ENCODE measurements at regions of chr17 and their contacts with region 1.

Region 1: GRCh38 chr17:16521070-16521727 is 29.2 kb upstream of the LRRC75A start:
- DNase-seq: peak; percentile 94
- ATAC-seq: peak; percentile 92
- H3K4me3 ChIP-seq: no peak overlapping the region
- H3K27ac ChIP-seq: no peak overlapping the region
- H3K4me1 ChIP-seq: peaks cover 13% of the 10 kb centered on the region
- H3K27me3 ChIP-seq: no peaks in the 10 kb centered on the region
- CTCF ChIP-seq: peak; percentile 99

Region 2: DNA sequence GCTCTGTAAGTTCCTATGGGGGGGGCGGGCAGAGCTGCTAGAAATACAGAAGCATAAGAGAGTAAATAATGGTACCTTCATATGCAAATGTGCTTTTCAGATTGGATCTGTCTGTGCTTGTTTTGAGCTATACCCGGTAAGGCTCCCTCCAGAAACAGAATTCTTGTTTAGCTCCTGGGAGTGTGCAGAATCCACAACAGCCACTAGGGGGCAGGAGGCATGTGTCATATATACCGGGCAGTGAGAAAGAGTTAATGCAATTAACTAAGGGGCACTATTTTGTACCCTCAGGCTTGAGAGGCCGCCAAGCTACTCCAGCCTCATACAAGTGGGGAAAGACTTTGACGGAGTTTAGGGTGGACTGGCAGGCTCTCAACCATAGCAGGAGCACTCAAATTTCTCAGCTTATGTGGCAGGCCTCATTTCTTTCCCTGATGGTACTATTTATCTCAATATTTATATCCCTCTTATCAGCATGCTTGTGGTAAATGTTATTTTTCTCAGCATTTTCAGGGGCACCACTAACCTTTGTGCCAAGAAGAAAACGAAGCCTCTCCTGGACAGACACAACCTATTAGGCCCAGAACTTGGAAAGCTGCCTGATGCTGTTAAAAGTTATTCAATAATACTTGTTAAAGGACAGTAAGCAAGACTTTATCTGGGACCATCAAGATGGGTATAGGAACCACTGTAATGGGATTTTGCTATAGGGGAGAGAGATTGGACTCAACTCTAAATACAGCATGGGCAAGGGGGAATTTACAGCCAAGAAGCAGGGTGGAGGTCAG is 157.3 kb before region 1 on chr17:
- CTCF ChIA-PET with region 1: interaction called, 3 read pairs
- POLR2A ChIA-PET with region 1: no interaction called
- intact Hi-C with region 1: loop called (anchors 2 kb)
- DNase-seq: peak; percentile 92
- ATAC-seq: peak; percentile 87
- H3K4me3 ChIP-seq: no peak overlapping the region
- H3K27ac ChIP-seq: no peak overlapping the region
- H3K4me1 ChIP-seq: 0 out of 2 replicates have a peak, but pooled peaks cover 3% of the 10 kb centered on the region
- H3K27me3 ChIP-seq: no peaks in the 10 kb centered on the region
- CTCF ChIP-seq: peak; percentile 99

Region 3: DNA sequence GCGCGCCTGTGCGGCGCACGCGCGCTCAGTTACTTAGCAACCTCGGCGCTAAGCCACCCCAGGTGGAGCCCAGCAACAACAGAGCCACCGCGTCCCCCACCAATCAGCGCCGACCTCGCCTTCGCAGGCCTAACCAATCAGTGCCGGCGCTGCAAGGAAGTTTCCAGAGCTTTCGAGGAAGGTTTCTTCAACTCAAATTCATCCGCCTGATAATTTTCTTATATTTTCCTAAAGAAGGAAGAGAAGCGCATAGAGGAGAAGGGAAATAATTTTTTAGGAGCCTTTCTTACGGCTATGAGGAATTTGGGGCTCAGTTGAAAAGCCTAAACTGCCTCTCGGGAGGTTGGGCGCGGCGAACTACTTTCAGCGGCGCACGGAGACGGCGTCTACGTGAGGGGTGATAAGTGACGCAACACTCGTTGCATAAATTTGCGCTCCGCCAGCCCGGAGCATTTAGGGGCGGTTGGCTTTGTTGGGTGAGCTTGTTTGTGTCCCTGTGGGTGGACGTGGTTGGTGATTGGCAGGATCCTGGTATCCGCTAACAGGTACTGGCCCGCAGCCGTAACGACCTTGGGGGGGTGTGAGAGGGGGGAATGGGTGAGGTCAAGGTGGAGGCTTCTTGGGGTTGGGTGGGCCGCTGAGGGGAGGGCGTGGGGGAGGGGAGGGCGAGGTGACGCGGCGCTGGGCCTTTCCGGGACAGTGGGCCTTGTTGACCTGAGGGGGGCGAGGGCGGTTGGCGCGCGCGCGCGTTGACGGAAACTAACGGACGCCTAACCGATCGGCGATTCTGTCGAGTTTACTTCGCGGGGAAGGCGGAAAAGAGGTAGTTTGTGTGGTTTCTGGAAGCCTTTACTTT is 140.3 kb before region 1 on chr17 and contains the start of gene UBB:
- CTCF ChIA-PET with region 1: no interaction called
- POLR2A ChIA-PET with region 1: no interaction called
- intact Hi-C with region 1: loop called (anchors 5 kb)
- DNase-seq: peak; percentile 98
- ATAC-seq: peak; percentile 89
- H3K4me3 ChIP-seq: peak within 1 kb of the TSS; percentile 81
- H3K27ac ChIP-seq: peak within 1 kb of the TSS; percentile 70
- H3K4me1 ChIP-seq: peaks cover 38% of the 10 kb centered on the region
- H3K27me3 ChIP-seq: no peaks in the 10 kb centered on the region
- CTCF ChIP-seq: no peak
- total RNA-seq, gene UBB: 2,112 and 2,970 TPM in 2 replicates

Region 4: GRCh38 chr17:16449121-16449570 is 72.1 kb before region 1 on chr17:
- CTCF ChIA-PET with region 1: interaction called, 10 read pairs
- POLR2A ChIA-PET with region 1: no interaction called
- intact Hi-C with region 1: loop called (anchors 1 kb)
- DNase-seq: peak; percentile 50
- ATAC-seq: no peak
- H3K4me3 ChIP-seq: no peak overlapping the region
- H3K27ac ChIP-seq: no peak overlapping the region
- H3K4me1 ChIP-seq: no peaks in the 10 kb centered on the region
- H3K27me3 ChIP-seq: no peaks in the 10 kb centered on the region
- CTCF ChIP-seq: no peak

Region 5: GRCh38 chr17:16506188-16506587 is 15.0 kb before region 1 on chr17:
- CTCF ChIA-PET with region 1: no interaction called
- POLR2A ChIA-PET with region 1: no interaction called
- intact Hi-C with region 1: no loop called
- DNase-seq: no peak
- ATAC-seq: no peak
- H3K4me3 ChIP-seq: no peak overlapping the region
- H3K27ac ChIP-seq: no peak overlapping the region
- H3K4me1 ChIP-seq: no peaks in the 10 kb centered on the region
- H3K27me3 ChIP-seq: no peaks in the 10 kb centered on the region
- CTCF ChIP-seq: peak; percentile 37; the same call in 1 of the 2 replicates